ENCODE measurements at regions of chr4 and their contacts with region 1.

Region 1: GRCh38 chr4:38160487-38161207 is 200.4 kb downstream of the PTTG2 start:
- DNase-seq: peak; percentile 88
- H3K4me3 Mint-ChIP-seq: peak overlapping the region; percentile 5
- H3K27ac Mint-ChIP-seq: peak overlapping the region; percentile 84
- H3K4me1 Mint-ChIP-seq: peaks cover 59% of the 10 kb centered on the region
- H3K27me3 Mint-ChIP-seq: peaks cover 7% of the 10 kb centered on the region

Region 2: DNA sequence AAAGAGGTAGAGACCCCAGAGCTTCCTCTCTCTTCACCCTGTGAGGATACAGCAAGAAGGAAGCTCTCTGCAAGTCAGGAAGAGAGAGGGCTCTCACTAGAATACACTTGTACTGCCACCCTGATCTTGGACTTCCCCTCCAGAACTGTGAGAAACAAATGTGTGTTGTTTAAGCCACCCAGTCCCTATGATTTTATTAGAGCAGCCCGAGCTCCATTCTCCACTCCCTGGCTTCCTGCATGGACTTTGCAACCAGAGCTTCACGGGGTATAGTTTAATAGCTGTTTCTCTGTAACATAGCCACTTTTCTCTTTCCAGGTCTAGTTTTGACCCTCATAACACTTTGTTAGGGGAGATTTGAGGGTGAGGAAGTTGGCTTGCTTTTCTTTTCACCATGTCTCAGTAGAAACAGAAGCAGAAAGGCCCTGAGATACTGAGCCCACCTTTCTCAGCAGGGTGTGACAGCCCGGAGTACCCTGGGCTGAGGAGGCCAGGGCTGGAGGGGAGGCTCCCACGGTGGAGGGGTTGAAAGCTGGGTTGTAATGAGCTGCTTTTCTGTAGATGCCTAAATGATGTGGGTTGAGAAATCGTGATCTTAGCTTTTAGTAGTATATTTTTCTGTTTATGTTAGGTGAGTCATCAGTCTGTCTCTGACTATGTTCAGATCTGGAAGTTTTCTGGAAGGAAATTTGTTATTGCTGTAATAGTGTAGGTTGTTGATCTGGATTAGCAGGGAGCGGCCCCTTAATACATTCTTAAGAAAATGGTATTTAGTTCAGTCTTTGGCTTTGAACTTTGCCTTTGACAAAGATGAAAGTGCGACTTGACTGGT is 81.8 kb before region 1 on chr4:
- intact Hi-C with region 1: loop called (anchors 5 kb)
- DNase-seq: no peak
- H3K4me3 Mint-ChIP-seq: no peak overlapping the region
- H3K27ac Mint-ChIP-seq: peak overlapping the region; percentile 61
- H3K4me1 Mint-ChIP-seq: peaks cover 17% of the 10 kb centered on the region
- H3K27me3 Mint-ChIP-seq: no peaks in the 10 kb centered on the region

Region 3: GRCh38 chr4:38179690-38180377 is 19.2 kb after region 1 on chr4:
- intact Hi-C with region 1: loop called (anchors 1 kb)
- DNase-seq: peak; percentile 92
- H3K4me3 Mint-ChIP-seq: no peak overlapping the region
- H3K27ac Mint-ChIP-seq: no peak overlapping the region
- H3K4me1 Mint-ChIP-seq: peaks cover 30% of the 10 kb centered on the region
- H3K27me3 Mint-ChIP-seq: peaks cover 17% of the 10 kb centered on the region

Region 4: DNA sequence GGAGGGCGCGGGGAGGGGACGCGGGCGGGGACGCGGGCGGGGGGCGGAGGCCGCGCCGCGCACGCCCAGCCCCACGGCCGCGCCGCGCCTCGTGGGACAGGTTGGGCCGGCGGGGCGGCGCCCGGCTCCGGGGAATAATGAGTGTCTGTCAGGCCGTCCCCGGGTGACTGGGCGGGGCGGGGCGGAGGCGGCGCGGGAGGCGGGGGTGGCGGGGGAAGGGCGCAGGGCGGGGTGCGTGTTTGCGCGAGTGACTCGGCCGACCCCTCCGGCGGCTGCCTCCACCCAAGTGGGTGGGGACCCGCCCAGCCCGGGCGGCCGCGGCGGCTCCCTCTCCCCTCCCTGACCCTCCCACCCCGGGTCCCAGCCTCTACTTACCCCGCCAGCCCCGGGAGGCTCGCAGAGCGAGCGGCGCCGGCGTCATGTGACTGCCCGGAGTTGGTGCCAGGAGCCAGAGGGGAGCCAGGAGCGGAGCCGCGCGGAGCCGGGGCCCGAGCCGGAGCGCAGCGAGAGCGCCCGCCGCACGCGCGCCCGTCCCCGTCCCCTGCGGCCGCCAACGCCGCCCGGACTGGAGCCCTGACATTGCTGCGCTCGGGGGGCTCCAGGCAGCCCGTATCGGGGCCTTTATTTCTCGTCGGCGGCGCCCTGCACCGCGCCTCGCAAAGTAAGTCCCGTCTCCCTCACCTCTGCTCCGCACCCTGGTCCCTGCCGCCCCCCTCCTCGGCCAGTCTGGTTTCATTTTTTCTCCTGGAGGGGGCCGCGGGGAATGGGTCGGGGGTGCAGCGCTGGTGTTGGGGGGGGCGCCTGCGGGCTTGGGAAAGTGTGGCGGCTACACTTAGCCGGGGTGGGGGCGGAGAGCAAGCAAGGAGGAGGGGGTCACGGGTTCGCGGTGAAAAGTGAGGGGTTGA is 503.4 kb after region 1 on chr4 and contains the start of gene KLF3:
- intact Hi-C with region 1: loop called (anchors 5 kb)
- DNase-seq: peak; percentile 96
- H3K4me3 Mint-ChIP-seq: peak within 1 kb of the TSS; percentile 76
- H3K27ac Mint-ChIP-seq: peak within 1 kb of the TSS; percentile 65
- H3K4me1 Mint-ChIP-seq: peaks cover 40% of the 10 kb centered on the region
- H3K27me3 Mint-ChIP-seq: peaks cover 47% of the 10 kb centered on the region
- total RNA-seq, gene KLF3: 0.83 and 1.0 TPM in 2 replicates

Measured in activated CD4-positive, alpha-beta T cell treated with anti-CD3 and anti-CD28 coated beads, Interleukin-2, amount 10 ng/mL, durations not matched to agents 24 days and 14 days (primary cell).